ENCODE measurements at regions of chr20 and their contacts with region 1.

Region 1: DNA sequence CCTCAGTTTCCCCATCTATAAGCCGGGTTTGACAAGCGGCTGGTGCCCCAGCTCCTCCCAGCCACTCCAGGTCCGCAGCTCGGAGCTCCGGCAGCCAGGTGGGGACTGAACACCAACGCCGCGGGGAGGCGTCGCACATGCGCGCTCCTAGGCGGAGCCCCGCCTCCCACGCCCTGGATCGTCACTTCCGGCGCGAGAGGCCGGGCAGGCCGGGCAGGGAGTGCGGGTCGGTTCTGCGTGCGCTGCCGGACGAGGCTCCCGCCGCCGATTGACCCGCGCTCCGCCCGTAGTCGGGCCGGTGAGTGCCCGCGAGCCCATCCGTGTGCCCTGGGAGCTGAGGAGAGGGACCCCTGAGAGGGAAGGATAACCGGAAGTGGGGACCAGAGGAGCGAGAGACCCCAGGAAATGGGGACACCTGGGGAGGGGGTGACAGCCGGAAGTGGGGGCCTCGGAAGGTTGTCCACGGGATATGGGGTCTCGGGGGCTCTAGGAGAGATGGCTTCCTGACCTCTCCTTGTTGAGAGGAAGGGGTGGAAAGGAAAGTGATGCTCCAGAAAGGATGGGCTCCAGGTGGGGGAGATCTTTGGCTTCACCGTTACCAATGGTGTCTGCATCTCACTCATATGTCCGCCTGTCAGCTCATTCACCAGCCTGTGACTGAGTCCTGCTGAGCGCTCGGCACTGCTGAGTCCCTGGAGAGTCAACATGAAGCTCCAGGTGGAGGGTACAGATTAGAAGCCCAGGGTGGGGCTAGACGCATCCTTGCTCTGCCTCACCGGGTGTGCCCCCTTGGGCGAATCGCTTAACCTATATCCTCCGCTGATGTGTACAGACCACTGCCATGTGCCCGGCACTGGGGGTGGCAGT is at the start of gene TTPAL:
- H3K4me3 Mint-ChIP-seq: peak within 1 kb of the TSS; percentile 98
- H3K27ac Mint-ChIP-seq: peak within 1 kb of the TSS; percentile 94
- H3K4me1 Mint-ChIP-seq: peaks cover 24% of the 10 kb centered on the region
- H3K27me3 Mint-ChIP-seq: peaks cover 6% of the 10 kb centered on the region

Region 2: GRCh38 chr20:44521484-44522481 is 45.9 kb after region 1 on chr20 and contains the start of gene SERINC3:
- intact Hi-C with region 1: loop called (anchors 1 kb)
- H3K4me3 Mint-ChIP-seq: peak within 1 kb of the TSS; percentile 82
- H3K27ac Mint-ChIP-seq: peak within 1 kb of the TSS; percentile 94
- H3K4me1 Mint-ChIP-seq: peaks cover 35% of the 10 kb centered on the region
- H3K27me3 Mint-ChIP-seq: no peaks in the 10 kb centered on the region

Measured in dendritic cell treated with granulocyte-macrophage colony-stimulating factor and Interleukin-4, amounts not matched to agents 40 ng/mL and 50 ng/mL, for 4 days (primary cell).